ENCODE measurements at regions of chr13 and their contacts with region 1.

Region 1: DNA sequence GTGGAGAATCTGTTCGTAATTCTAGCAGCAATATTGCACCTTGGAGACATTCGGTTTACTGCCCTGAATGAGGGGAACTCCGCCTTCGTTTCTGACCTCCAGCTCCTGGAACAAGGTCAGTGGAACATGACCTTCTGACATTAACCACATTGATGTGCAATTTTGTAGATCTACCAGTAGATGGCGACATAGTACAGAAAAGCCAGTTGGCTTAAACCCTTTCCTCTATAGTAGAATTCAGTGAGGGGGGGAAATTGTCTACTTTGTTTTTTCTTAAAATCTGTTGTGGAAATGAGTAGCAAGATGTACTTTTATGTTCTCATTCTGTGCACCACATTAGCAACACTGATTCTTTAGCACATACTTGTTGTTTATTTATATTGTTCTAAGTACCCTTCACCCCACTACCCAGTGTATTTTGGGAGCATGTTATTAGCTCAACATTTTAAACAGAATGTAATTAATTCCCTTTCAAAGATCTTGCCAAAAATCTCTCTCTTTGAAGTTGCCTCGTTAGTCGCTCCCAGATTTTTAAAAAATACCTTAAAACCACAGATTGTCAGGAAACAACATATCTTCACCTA is 332.2 kb downstream of the MYO16 start:
- DNase-seq: peak; percentile 29 to 57 (median 55)
- H3K4me3 ChIP-seq: no peak overlapping the region
- H3K4me3 Mint-ChIP-seq: no peak overlapping the region
- H3K27ac ChIP-seq: no peak overlapping the region
- H3K27ac Mint-ChIP-seq: peak overlapping the region in 1 of 7 donors; percentile 24
- H3K4me1 ChIP-seq: no peaks in the 10 kb centered on the region
- H3K4me1 Mint-ChIP-seq: peaks cover 0 to 2% (median 0%) of the 10 kb centered on the region in 4 donors
- H3K27me3 ChIP-seq: no peaks in the 10 kb centered on the region
- H3K27me3 Mint-ChIP-seq: peaks cover 1 to 2% of the 10 kb centered on the region in 2 donors

Region 2: DNA sequence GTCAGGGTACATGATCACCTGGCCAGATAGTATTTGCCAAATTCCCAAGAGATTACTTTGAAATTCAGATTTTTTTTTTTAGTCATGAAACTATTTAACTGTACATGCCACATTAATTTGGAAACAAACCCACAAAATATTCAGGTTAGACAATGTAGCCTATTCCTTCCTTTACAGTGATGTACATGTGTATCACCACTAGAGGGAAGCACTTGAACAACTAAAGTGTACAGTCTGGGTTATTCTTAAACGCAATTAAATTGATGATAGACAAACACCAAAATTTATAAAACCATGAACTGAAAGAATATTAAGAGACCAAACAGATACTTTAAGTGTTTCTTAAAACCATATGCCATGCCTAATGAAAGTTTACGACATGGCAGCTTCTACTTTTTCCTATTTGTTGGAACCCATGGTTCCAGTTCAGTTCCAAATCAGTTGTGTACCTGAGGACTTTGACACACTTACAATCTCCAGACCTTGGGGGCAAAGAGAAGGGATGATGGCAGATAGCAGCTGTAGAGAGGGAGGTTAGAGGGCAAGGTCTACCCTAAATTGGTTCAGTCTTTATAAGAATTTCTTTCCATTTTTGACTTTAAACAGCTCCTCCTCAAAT is 639.3 kb before region 1 on chr13:
- CTCF ChIA-PET with region 1: interaction called, 4 read pairs
- POLR2A ChIA-PET with region 1: no interaction called
- intact Hi-C with region 1: loop called (anchors 2 kb)
- DNase-seq: peak in 4 of 5 donors; percentile 51 to 60 (median 54)
- H3K4me3 ChIP-seq: no peak overlapping the region
- H3K4me3 Mint-ChIP-seq: peak overlapping the region in 2 of 8 donors; percentile 37 to 40
- H3K27ac ChIP-seq: no peak overlapping the region
- H3K27ac Mint-ChIP-seq: peak overlapping the region in 1 of 7 donors; percentile 41
- H3K4me1 ChIP-seq: peaks cover 21% of the 10 kb centered on the region
- H3K4me1 Mint-ChIP-seq: peaks cover 13 to 49% (median 33%) of the 10 kb centered on the region in 4 donors
- H3K27me3 ChIP-seq: no peaks in the 10 kb centered on the region
- H3K27me3 Mint-ChIP-seq: no peaks in the 10 kb centered on the region

Region 3: DNA sequence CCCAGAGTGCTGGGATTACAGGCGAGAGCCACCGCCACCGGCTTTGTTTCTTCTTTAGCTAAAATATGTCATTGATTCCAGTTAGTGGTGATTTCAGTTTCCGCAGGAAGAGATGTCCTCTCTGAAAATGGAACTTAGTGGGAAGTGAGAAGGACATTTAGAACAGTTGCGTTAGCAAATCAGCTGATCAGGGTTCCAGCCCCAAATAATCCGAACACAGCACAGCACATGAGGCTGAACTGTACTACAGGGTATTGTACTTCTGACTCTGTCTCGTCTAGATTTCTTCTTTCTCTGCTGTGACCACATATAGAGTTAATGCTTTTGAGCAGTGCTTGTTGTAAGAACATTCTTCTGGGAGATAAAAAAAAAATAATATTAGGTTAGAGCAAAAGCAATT is 17.8 kb before region 1 on chr13:
- CTCF ChIA-PET with region 1: no interaction called
- POLR2A ChIA-PET with region 1: no interaction called
- intact Hi-C with region 1: no loop called
- DNase-seq: no peak
- H3K4me3 ChIP-seq: no peak overlapping the region
- H3K4me3 Mint-ChIP-seq: no peak overlapping the region
- H3K27ac ChIP-seq: no peak overlapping the region
- H3K27ac Mint-ChIP-seq: no peak overlapping the region
- H3K4me1 ChIP-seq: no peaks in the 10 kb centered on the region
- H3K4me1 Mint-ChIP-seq: no peaks in the 10 kb centered on the region
- H3K27me3 ChIP-seq: no peaks in the 10 kb centered on the region
- H3K27me3 Mint-ChIP-seq: peaks cover 0 to 3% of the 10 kb centered on the region in 2 donors

Region 4: GRCh38 chr13:109857325-109858202 is 895.9 kb after region 1 on chr13:
- CTCF ChIA-PET with region 1: no interaction called
- POLR2A ChIA-PET with region 1: no interaction called
- intact Hi-C with region 1: no loop called
- DNase-seq: no peak
- H3K4me3 ChIP-seq: no peak overlapping the region
- H3K4me3 Mint-ChIP-seq: no peak overlapping the region
- H3K27ac ChIP-seq: no peak overlapping the region
- H3K27ac Mint-ChIP-seq: no peak overlapping the region
- H3K4me1 ChIP-seq: no peaks in the 10 kb centered on the region
- H3K4me1 Mint-ChIP-seq: peaks cover 0 to 1% (median 0%) of the 10 kb centered on the region in 4 donors
- H3K27me3 ChIP-seq: peaks cover 4% of the 10 kb centered on the region
- H3K27me3 Mint-ChIP-seq: peaks cover 33 to 35% of the 10 kb centered on the region in 2 donors

Region 5: GRCh38 chr13:110116072-110116487 is 1154.4 kb after region 1 on chr13:
- CTCF ChIA-PET with region 1: interaction called, 7 read pairs
- POLR2A ChIA-PET with region 1: no interaction called
- intact Hi-C with region 1: loop called (anchors 1 kb)
- DNase-seq: peak in 4 of 5 donors; percentile 18 to 33 (median 25)
- H3K4me3 ChIP-seq: no peak overlapping the region
- H3K4me3 Mint-ChIP-seq: peak overlapping the region in 1 of 8 donors; percentile 60
- H3K27ac ChIP-seq: no peak overlapping the region
- H3K27ac Mint-ChIP-seq: no peak overlapping the region
- H3K4me1 ChIP-seq: no peaks in the 10 kb centered on the region
- H3K4me1 Mint-ChIP-seq: peaks cover 0 to 3% (median 0%) of the 10 kb centered on the region in 4 donors
- H3K27me3 ChIP-seq: no peaks in the 10 kb centered on the region
- H3K27me3 Mint-ChIP-seq: peaks cover 19 to 23% of the 10 kb centered on the region in 2 donors

Region 6: GRCh38 chr13:110412132-110412914 is 1450.7 kb after region 1 on chr13:
- CTCF ChIA-PET with region 1: interaction called, 10 read pairs
- POLR2A ChIA-PET with region 1: no interaction called
- intact Hi-C with region 1: no loop called
- DNase-seq: peak in 4 of 5 donors; percentile 38 to 43 (median 40)
- H3K4me3 ChIP-seq: no peak overlapping the region
- H3K4me3 Mint-ChIP-seq: no peak overlapping the region
- H3K27ac ChIP-seq: no peak overlapping the region
- H3K27ac Mint-ChIP-seq: no peak overlapping the region
- H3K4me1 ChIP-seq: peaks cover 3% of the 10 kb centered on the region
- H3K4me1 Mint-ChIP-seq: peaks cover 0 to 10% (median 3%) of the 10 kb centered on the region in 4 donors
- H3K27me3 ChIP-seq: peaks cover 5% of the 10 kb centered on the region
- H3K27me3 Mint-ChIP-seq: peaks cover 21 to 41% of the 10 kb centered on the region in 2 donors

Measured in CD4-positive, alpha-beta memory T cell (primary cell).